Posterior vena cava (tissue), 2 donors: ENCODE measurements at regions of chr1 and their contacts with region 1.

Region 1: GRCh38 chr1:39901698-39902459 is at the start of gene MYCL:
- DNase-seq: peak; percentile 85
- total RNA-seq, gene MYCL: 0.14 to 0.51 TPM

Region 2: DNA sequence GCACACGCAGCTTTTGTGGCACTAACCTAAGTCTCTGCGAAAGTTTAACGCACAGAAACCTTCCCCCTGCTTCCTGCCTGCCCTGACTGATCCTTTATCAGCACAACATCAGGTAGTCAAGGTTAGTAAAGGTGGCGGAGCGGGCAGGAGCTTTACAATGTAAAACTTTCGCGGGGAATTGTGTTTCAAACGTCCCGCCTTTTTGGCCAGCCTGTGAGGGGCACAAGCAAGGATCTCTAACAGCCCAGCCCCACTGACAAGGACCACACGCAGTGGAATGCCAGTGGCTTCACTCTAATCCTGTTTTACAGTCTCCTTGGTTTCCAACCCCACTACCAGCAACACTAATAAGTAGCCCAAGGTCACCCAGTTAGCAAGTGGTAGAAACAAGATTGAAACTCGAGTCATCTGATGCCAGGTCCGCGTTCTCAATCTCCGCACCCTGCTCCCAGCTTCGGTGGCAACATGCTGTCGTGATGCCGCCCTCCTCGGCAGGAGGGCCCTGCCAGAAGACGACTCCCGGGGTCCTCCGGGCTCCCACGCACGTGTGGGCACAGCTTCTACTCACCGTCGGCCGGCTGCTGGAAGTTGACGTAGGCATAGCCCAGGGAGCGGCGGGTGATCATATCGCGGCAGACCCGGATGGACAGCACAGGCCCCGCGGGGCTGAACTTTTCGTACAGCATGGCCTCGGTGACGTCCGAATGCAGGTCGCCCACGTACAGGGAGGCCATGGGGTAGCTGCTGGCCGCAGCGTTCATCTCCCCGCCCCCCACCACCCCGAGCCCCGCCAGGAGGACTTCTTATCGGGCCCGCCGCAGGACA is 326.5 kb before region 1 on chr1:
- intact Hi-C with region 1: loop called in 1 of 2 experiments (anchors 5 kb)
- DNase-seq: peak; percentile 93

Region 3: GRCh38 chr1:39711104-39711965 is 190.5 kb before region 1 on chr1:
- intact Hi-C with region 1: no loop called
- DNase-seq: no peak

Region 4: GRCh38 chr1:39776400-39776713 is 125.5 kb before region 1 on chr1:
- intact Hi-C with region 1: no loop called
- DNase-seq: peak; percentile 84

Region 5: DNA sequence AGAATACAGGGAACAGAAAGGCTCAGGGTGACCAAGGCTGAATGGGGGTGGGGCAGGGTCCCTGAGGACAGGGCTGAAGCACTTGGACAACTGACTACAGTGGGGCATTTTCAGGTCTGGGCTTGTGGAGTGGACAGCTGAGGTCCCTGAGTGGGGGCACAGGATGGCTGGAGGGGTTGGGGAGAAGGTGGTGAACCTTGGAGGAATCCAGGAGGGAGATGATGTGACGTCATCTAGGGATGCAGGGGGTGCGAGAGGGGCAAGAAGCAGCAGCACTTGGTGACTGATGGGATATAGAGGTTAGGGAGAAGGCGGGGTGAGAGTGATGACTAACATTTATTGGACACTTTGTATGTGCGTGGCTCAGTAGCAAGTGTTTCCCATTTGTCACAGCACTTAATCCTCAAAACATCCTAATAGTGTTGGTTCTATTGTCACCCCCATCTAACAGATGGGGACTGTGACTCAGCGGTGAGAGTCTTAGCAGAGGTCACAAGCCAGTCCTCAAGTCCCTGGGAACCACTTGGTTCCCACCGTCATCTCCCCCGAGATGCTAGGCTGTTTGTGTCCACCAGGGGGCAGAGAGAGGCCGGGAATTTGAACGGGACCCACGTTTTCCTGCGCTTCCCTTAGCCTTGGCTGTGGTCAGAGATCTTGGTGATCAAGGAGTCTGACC is 85.3 kb before region 1 on chr1:
- intact Hi-C with region 1: loop called in 1 of 2 experiments (anchors 10 kb)
- DNase-seq: peak; percentile 94

Region 6: DNA sequence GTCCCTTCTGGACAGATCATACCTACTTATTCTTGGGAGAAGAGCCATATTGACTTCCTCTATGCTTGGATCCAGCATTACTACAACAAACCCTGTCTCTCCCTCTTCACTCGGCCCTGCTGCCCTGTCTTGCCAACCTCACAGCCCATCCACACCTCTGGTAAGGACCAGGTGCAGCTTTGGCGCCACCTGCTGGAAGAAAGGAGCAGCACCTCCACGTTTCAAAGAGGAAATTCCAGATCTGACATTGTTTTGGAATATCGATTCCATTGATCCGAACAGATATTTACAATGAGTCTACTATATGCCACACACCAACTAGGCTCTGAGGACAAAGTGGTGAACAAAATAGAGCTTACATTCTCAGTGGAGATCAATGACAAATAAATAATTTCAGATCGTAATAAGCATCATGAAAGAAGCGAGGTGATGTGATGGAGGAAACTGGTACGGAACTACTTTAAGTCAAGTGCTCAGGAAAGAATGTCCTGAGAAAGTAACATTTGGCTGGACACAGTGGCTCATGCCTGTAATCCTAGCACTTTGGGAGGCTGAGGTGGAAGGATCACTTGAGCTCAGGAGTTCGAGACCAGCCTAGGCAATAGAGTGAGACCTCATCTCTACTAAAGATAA is 71.7 kb after region 1 on chr1:
- intact Hi-C with region 1: no loop called
- DNase-seq: peak; percentile 89